Left colon (tissue), 2 donors: ENCODE measurements at regions of chr1 and their contacts with region 1.

Region 1: GRCh38 chr1:185813401-185813979 is 79.3 kb downstream of the HMCN1 start:
- DNase-seq: peak in 1 of 2 donors; percentile 16
- ATAC-seq: peak; percentile 81

Region 2: DNA sequence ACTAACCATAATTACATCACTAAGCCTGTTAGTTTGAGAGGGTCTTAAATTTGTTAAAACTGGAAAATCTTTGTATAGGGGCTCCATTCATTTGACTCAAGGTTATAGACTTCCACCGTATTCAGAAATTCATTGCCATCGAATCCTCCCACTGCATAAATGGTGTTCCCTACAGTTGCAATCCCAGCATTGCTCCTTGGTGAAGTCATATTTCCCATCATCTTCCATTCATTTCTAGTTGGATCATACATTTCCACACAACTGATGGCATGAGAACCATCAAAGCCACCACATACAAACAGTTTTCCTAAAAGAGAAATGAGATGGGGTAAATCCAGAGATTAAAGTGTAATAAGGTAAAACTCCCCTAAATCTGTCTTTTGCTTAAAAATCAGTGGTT is 515.5 kb before region 1 on chr1:
- intact Hi-C with region 1: no loop called
- DNase-seq: no peak
- ATAC-seq: no peak

Region 3: DNA sequence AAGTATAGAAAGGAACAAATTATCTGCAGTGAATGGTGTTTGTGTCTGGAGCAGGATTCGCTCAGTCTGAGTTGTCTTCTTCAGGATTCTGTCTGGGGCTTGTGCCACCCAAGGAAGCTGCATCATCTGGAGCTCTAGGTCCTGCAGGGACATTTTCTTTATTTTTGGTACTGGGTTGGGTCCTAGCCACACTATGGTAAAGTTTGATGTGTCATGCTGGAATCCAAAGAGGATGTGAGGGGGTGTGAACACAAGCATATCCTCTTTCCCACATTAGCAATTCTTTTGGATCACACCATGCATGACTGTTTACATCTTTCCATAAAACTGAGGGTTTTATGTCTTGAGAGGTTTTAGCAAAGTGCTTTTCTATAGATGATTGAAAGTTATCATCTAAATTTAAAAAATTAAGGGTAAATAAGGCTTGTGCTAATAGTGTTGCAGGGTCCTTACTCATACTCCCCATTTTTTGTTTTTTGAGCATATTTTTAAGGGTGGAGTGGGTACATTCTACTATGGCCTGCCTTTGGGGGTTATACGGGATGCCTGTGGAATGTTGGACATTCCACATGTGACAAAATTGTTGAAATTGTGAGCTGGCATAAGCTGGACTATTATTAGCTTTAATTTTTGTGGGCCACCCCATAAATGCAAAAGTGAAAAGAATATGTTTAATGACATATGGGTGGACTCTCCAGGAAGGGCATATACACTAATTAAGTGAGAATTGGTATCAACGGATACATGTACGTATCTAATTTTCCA is 231.3 kb before region 1 on chr1:
- intact Hi-C with region 1: no loop called
- DNase-seq: no peak
- ATAC-seq: no peak

Region 4: DNA sequence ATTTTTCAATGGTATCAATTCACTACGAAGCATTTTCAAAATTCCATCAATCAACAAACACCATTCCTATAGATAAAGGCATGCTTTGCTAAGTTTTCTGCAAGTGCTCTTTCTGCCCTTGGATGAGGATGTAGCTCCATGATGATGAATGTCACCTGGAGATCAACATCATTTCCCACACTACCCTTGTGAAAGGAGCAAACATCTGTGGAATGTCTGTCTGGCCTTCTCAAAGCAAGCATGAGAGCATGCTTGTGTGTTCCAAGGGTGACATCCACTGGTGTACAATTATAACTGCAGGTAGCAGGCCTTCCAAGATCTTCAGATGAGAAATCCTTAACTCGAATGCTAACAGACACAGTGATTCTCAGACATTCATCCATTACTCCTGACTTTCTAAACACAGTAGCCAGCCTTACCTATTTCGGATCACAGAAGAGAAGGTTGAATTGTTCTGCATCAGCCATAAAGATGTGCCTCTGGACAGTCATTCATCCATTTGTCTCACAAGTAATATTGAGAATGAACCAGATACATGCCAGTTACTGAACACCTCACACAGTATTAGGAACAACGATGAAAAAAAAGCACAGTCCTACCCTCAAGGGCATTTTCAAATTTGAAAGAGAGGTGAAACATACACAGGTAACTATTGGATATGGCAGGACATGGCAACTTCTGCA is 399.2 kb after region 1 on chr1:
- intact Hi-C with region 1: loop called in 1 of 2 experiments (anchors 2 kb)
- DNase-seq: peak; percentile 8 to 33
- ATAC-seq: peak; percentile 96